Dorsolateral prefrontal cortex (tissue), 120 donors: ENCODE measurements at regions of chr2 and their contacts with region 1.

Region 1: DNA sequence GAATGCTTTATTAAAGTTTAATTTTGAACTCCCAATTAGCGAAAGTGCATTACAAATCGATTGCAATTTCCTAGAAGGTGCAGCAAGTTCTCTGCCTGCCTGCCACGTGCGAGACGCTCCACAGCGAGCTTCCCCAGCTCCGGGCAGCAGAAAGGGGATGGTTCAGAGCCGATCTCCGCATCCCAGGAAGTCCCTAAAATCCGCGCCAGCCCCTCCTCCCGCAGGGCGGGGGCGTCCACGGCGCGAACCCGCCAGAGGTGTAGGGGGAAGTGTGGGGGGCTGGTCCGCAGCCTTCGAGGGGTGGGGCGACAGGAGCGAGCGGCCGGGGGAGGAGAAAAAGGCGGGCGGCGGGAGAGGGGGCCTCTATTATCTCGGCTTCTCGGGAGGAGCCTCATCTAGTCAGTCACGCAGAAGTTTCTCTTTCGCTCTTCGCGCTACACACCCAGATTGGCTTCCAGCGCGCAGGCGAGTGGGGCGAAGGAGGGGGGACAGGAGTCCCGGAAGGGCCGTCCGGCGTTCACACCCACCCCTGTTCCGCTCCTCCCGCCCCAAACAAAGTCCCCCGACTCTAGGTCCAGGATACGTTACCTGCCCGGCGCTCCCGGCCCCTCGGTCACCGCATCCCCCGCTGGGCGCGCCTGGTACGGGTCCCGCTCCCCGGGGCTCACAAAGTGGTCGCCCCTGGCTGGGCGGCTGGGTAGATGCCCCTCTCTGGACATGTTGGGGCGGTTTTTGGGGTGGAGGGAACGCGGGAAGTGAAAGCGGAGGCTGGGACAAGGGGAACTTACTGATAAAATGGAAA is 9.1 kb upstream of the NR4A2 start:
- DNase-seq: peak; percentile 61 to 87 (median 82)
- H3K4me3 ChIP-seq: peak overlapping the region; percentile 69 to 97 (median 87)
- H3K27ac ChIP-seq: peak overlapping the region; percentile 94 to 100 (median 100)
- H3K27me3 ChIP-seq: no peaks in the 10 kb centered on the region
- CTCF ChIP-seq: peak in 6 of 56 donors; percentile 1 to 14 (median 8)

Region 2: DNA sequence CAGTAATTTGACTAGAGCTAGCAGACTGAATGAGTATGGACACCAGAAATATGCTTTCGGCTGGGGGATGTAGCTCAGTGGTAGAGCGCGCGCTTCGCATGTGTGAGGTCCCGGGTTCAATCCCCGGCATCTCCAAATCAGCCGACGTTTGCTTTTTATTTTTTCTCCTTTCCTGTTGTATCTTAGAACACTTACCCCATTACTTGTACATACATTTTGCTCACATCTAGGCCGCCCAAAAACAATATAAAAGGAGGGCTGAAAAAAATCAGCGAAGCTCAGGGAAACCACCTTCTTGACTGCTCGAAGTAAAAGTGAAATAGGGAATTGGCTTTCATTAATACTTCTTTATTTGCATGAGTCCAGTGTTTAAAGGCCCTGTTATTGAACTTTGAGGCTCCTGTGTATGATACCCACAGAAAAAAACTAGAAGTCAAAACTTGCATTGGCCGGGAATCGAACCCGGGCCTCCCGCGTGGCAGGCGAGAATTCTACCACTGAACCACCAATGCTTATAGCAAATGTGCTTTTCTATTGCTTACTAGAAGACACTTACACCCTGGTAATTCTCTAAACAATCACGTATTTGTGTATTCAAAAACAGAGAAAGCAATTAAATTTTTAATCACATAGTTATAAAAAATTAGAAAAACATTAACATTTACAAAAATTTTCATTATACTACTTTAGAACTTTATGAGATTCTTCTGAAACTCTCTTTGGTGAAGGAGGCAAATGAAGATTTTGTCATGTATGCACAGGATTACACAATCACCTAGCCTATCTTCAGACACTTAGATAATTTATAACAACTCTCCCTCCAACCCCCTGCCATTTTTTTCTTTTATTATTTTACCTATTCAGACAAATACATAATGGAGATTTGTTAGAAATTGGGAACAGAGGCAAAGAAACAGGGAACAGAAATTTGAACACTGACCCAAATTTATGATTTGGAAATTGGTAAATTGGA is 59.3 kb after region 1 on chr2:
- intact Hi-C with region 1: loop called (anchors 1 to 2 kb)
- DNase-seq: peak; percentile 62 to 81 (median 68)
- H3K4me3 ChIP-seq: peak overlapping the region; percentile 56 to 98 (median 76)
- H3K27ac ChIP-seq: peak overlapping the region; percentile 81 to 100 (median 98)
- H3K27me3 ChIP-seq: no peaks in the 10 kb centered on the region
- CTCF ChIP-seq: peak in 5 of 56 donors; percentile 5 to 15 (median 8)

Region 3: GRCh38 chr2:156443089-156443488 is 101.4 kb after region 1 on chr2:
- intact Hi-C with region 1: no loop called
- DNase-seq: no peak
- H3K4me3 ChIP-seq: no peak overlapping the region
- H3K27ac ChIP-seq: no peak overlapping the region
- H3K27me3 ChIP-seq: no peaks in the 10 kb centered on the region
- CTCF ChIP-seq: no peak